ENCODE measurements at regions of chr17 and their contacts with region 1.

Region 1: DNA sequence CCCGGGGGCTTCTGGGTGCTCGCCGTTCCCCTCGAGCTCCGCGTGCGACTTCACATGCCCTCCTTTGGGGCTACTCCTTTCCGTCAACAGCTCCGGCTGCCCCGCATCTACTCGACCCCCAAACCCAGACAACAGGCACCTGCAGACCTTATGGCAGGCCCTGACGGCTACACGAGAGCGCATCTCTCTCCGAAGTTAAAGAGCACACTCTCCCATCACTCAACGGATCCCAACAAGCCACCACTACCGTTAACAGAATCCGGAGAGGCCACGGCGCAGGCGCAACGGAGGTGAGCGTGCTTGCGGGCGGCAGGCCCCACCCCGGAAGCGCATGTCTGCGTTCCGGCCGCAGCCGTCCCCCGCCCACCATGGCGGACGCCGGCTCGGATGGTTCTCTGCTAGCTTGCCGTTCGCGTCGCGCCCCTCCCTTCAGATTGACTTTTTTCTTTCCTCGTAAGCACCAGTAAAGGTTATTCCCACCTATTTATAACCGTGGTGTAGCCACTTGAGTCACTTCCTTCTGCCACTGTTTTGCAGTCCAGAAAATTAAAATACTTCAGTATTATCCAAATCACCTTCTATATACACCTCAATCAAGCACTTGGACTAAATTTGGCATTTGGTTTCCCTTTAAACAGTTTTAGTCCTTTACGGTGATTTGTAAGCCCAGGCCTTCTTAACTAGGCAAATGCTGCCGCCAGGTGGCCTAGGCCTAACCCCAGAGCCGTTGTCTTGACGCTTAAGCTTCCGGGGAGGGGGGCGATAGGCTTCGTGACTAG is at the start of gene POLG2:
- DNase-seq: peak; percentile 93
- ATAC-seq: peak; percentile 85
- H3K4me3 Mint-ChIP-seq: peak within 1 kb of the TSS; percentile 100
- H3K27ac Mint-ChIP-seq: peak within 1 kb of the TSS; percentile 99
- H3K4me1 Mint-ChIP-seq: peaks cover 75% of the 10 kb centered on the region
- H3K27me3 Mint-ChIP-seq: no peaks in the 10 kb centered on the region
- CTCF ChIP-seq: no peak
- total RNA-seq, gene POLG2: 50.3 and 63.9 TPM in 2 replicates

Region 2: GRCh38 chr17:64155751-64156544 is 341.0 kb before region 1 on chr17:
- CTCF ChIA-PET with region 1: no interaction called
- POLR2A ChIA-PET with region 1: no interaction called
- intact Hi-C with region 1: no loop called
- DNase-seq: no peak
- ATAC-seq: no peak
- H3K4me3 Mint-ChIP-seq: no peak overlapping the region
- H3K27ac Mint-ChIP-seq: no peak overlapping the region
- H3K4me1 Mint-ChIP-seq: no peaks in the 10 kb centered on the region
- H3K27me3 Mint-ChIP-seq: no peaks in the 10 kb centered on the region
- CTCF ChIP-seq: no peak

Region 3: DNA sequence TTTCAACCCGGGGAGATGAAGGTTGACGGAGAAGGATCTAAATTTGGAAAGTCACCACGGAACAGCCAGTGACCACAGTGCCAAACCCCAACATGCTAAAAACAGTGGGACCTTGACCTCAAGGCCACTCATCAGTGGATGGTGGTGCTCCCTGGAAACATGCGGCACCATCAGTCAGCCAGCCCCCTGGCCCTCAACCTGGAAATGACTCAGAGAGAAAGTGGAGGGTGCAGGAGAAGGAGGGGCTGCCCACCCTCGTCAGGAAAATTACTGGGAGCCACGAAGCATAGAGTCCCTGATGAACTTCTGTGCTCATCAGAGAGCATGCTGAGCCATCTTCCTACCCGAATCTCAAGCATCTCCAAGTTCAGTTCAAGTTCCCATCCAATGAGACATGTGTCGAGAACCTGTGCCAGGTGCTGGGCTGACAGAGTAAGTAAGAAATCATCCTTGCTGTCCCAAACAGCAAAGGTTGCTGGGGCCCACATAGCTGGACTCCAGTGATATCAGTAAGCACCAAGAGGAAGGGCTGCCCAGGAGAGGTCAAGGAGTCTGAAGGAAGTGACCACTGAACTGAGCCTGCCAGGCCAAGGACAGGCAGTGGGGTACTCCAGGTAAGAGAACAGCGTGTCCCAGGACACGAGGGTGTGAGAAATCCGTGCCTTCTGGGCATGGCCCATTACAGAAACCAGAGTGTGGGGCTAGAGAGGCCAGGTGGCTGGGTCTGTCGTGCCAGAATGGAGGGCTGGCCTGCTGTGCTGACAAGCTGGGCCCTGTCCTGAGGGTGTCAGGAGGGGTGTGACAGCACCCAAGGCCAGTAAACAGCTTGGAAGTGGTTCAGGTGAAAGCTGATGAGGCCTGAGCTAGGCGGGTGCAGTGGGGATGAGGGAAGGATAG is 111.5 kb before region 1 on chr17:
- CTCF ChIA-PET with region 1: no interaction called
- POLR2A ChIA-PET with region 1: no interaction called
- intact Hi-C with region 1: no loop called
- DNase-seq: no peak
- ATAC-seq: no peak
- H3K4me3 Mint-ChIP-seq: no peak overlapping the region
- H3K27ac Mint-ChIP-seq: no peak overlapping the region
- H3K4me1 Mint-ChIP-seq: peaks cover 12% of the 10 kb centered on the region
- H3K27me3 Mint-ChIP-seq: no peaks in the 10 kb centered on the region
- CTCF ChIP-seq: no peak

Region 4: GRCh38 chr17:64399071-64399766 is 97.8 kb before region 1 on chr17:
- CTCF ChIA-PET with region 1: no interaction called
- POLR2A ChIA-PET with region 1: interaction called, 10 read pairs
- intact Hi-C with region 1: no loop called
- DNase-seq: no peak
- ATAC-seq: no peak
- H3K4me3 Mint-ChIP-seq: no peak overlapping the region
- H3K27ac Mint-ChIP-seq: no peak overlapping the region
- H3K4me1 Mint-ChIP-seq: peaks cover 75% of the 10 kb centered on the region
- H3K27me3 Mint-ChIP-seq: no peaks in the 10 kb centered on the region
- CTCF ChIP-seq: no peak

Region 5: GRCh38 chr17:64448665-64449512 is 48.1 kb before region 1 on chr17 and contains the start of gene MILR1:
- CTCF ChIA-PET with region 1: no interaction called
- POLR2A ChIA-PET with region 1: interaction called, 3 read pairs
- intact Hi-C with region 1: loop called (anchors 1 kb)
- DNase-seq: no peak
- ATAC-seq: peak; percentile 98
- H3K4me3 Mint-ChIP-seq: peak within 1 kb of the TSS; percentile 85
- H3K27ac Mint-ChIP-seq: peak within 1 kb of the TSS; percentile 95
- H3K4me1 Mint-ChIP-seq: peaks cover 44% of the 10 kb centered on the region
- H3K27me3 Mint-ChIP-seq: no peaks in the 10 kb centered on the region
- CTCF ChIP-seq: no peak
- total RNA-seq, gene MILR1: 13.5 and 13.9 TPM in 2 replicates

Region 6: DNA sequence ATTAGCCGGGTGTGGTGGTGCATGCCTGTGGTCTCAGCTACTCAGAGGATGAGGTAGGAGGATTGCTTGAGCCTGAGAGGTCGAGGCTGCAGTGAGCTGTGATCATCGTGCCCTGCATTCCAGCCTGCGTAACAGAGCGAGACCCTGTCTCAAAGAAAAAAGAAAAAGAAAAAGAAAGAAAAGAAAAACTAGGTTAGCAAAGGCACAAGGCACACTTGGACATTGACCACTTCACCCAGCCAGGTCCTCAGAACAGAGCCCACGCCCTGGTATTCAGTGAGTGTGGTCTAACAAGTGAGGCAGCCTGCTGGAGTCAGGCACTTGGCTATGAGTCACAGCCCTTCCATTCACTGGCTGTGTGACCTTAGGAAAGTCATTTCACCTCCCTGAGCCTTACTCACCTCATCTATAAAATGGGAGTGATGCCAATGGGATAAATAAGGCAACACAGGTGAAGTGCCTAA is 37.7 kb before region 1 on chr17:
- CTCF ChIA-PET with region 1: interaction called, 8 read pairs
- POLR2A ChIA-PET with region 1: interaction called, 22 read pairs
- intact Hi-C with region 1: loop called (anchors 2 kb)
- DNase-seq: no peak
- ATAC-seq: no peak
- H3K4me3 Mint-ChIP-seq: no peak overlapping the region
- H3K27ac Mint-ChIP-seq: no peak overlapping the region
- H3K4me1 Mint-ChIP-seq: peaks cover 47% of the 10 kb centered on the region
- H3K27me3 Mint-ChIP-seq: no peaks in the 10 kb centered on the region
- CTCF ChIP-seq: no peak

Region 7: DNA sequence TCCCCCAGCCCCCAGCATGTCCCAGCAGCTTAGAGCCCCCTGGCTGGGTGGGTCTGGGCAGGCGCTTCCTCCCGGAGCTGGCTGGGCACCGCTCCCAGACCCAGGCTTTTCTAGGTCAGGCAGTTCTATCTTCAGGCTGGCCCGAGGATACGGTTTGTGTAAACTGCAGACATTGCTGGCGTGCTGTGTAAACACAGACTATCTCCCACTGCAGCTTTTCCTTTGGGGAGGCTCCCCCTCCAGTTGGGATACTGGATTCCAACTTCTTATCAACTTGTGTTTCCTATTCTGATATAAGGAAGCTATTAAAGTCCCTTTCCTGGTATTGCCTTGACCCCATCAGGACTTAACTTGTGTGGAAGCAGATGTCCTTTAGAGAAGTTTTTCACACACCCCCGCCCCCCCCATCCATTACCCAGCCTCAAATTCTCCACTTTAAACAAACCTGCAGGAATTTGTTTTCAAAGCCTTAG is 577.8 kb after region 1 on chr17:
- CTCF ChIA-PET with region 1: no interaction called
- POLR2A ChIA-PET with region 1: no interaction called
- intact Hi-C with region 1: no loop called
- DNase-seq: no peak
- ATAC-seq: no peak
- H3K4me3 Mint-ChIP-seq: no peak overlapping the region
- H3K27ac Mint-ChIP-seq: no peak overlapping the region
- H3K4me1 Mint-ChIP-seq: no peaks in the 10 kb centered on the region
- H3K27me3 Mint-ChIP-seq: no peaks in the 10 kb centered on the region
- CTCF ChIP-seq: no peak